CD4-positive, alpha-beta memory T cell (primary cell): ENCODE measurements at regions of chr19 and their contacts with region 1.

Region 1: DNA sequence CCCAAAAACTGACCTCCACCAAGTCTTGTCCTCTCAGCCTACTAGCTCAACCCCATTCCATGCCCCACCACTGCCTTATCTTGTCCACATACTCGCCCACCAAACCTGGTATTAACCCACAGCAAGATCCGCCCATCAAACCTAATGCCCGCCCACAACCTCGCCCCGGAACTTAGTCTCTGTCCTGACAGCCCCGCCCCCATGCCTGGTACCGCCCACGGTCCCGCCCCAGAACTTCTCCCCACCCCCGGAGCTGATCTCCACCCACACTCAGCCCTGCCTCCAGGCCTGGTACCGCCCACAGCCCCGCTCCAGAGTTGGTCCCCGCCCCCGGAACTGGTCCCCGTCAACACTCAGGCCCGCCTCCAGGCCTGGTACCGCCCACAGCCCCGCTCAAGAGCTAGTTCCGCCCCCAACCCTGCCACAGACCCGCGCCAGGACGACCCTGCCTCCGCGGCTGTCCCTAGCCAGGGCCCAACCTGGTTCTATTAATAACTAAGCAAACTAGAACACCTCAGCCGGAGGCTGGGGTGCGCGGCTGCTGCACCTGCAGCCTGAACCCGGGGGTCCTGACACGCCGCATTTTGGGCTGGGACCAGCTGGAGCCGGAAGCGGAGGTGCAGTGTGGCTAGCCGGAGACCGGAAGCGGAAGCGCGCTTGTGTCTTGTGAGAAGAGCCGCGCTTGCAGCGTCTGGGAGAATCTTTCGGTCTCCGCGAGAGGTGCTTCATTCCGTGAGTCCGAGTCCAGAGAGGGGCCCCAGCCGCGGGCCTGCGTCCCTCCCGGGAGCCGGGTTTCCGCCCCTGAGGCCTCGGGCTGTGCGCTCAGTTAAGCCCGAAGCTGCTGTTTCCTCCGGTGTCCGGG is at the start of gene ZNF557:
- DNase-seq: peak; percentile 99 to 100 (median 99)
- H3K4me3 ChIP-seq: peak within 1 kb of the TSS; percentile 92 to 96
- H3K4me3 Mint-ChIP-seq: peak within 1 kb of the TSS; percentile 92 to 99 (median 96)
- H3K27ac ChIP-seq: peak within 1 kb of the TSS; percentile 74
- H3K27ac Mint-ChIP-seq: peak within 1 kb of the TSS; percentile 89 to 98 (median 95)
- H3K4me1 ChIP-seq: peaks cover 21% of the 10 kb centered on the region
- H3K4me1 Mint-ChIP-seq: peaks cover 11 to 36% (median 18%) of the 10 kb centered on the region in 4 donors
- H3K27me3 ChIP-seq: no peaks in the 10 kb centered on the region
- H3K27me3 Mint-ChIP-seq: no peaks in the 10 kb centered on the region
- total RNA-seq, gene ZNF557: 32.3 to 33.2 TPM

Region 2: GRCh38 chr19:6903452-6903851 is 165.8 kb before region 1 on chr19:
- CTCF ChIA-PET with region 1: no interaction called
- POLR2A ChIA-PET with region 1: no interaction called
- intact Hi-C with region 1: no loop called
- DNase-seq: no peak
- H3K4me3 ChIP-seq: no peak overlapping the region
- H3K4me3 Mint-ChIP-seq: no peak overlapping the region
- H3K27ac ChIP-seq: no peak overlapping the region
- H3K27ac Mint-ChIP-seq: no peak overlapping the region
- H3K4me1 ChIP-seq: no peaks in the 10 kb centered on the region
- H3K4me1 Mint-ChIP-seq: peaks cover 0 to 2% (median 0%) of the 10 kb centered on the region in 4 donors
- H3K27me3 ChIP-seq: no peaks in the 10 kb centered on the region
- H3K27me3 Mint-ChIP-seq: peaks cover 1 to 2% of the 10 kb centered on the region in 2 donors

Region 3: DNA sequence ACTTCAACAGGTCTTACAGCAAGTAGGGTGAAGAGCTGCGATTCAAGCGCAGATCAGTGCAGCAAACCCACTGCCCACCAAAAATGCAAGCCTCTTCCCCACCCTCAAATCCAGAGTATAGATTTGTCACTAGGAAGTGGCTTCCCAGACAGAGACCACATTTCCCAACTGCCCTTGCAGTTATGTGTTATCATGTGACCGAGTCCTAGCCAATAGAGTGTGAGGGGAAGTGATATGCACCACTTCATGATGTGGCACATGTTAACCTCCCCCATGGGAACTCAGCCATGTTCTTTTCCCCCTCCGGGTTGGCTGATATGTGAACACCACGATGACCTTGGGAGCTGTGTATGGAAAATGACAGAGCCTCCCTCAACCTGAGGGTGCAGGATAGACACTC is 98.8 kb before region 1 on chr19:
- CTCF ChIA-PET with region 1: no interaction called
- POLR2A ChIA-PET with region 1: no interaction called
- intact Hi-C with region 1: no loop called
- DNase-seq: no peak
- H3K4me3 ChIP-seq: peak overlapping the region in 1 of 2 donors; percentile 11
- H3K4me3 Mint-ChIP-seq: no peak overlapping the region
- H3K27ac ChIP-seq: no peak overlapping the region
- H3K27ac Mint-ChIP-seq: peak overlapping the region in 1 of 7 donors; percentile 10
- H3K4me1 ChIP-seq: no peaks in the 10 kb centered on the region
- H3K4me1 Mint-ChIP-seq: no peaks in the 10 kb centered on the region
- H3K27me3 ChIP-seq: no peaks in the 10 kb centered on the region
- H3K27me3 Mint-ChIP-seq: peaks cover 0 to 2% of the 10 kb centered on the region in 2 donors

Region 4: GRCh38 chr19:7013678-7014077 is 55.6 kb before region 1 on chr19:
- CTCF ChIA-PET with region 1: no interaction called
- POLR2A ChIA-PET with region 1: interaction called, 11 read pairs
- intact Hi-C with region 1: no loop called
- DNase-seq: peak in 1 of 5 donors; percentile 17
- H3K4me3 ChIP-seq: no peak overlapping the region
- H3K4me3 Mint-ChIP-seq: peak overlapping the region in 6 of 8 donors; percentile 4 to 68 (median 30)
- H3K27ac ChIP-seq: no peak overlapping the region
- H3K27ac Mint-ChIP-seq: peak overlapping the region; percentile 33 to 89 (median 53)
- H3K4me1 ChIP-seq: peaks cover 38% of the 10 kb centered on the region
- H3K4me1 Mint-ChIP-seq: peaks cover 24 to 54% (median 35%) of the 10 kb centered on the region in 4 donors
- H3K27me3 ChIP-seq: no peaks in the 10 kb centered on the region
- H3K27me3 Mint-ChIP-seq: no peaks in the 10 kb centered on the region

Region 5: DNA sequence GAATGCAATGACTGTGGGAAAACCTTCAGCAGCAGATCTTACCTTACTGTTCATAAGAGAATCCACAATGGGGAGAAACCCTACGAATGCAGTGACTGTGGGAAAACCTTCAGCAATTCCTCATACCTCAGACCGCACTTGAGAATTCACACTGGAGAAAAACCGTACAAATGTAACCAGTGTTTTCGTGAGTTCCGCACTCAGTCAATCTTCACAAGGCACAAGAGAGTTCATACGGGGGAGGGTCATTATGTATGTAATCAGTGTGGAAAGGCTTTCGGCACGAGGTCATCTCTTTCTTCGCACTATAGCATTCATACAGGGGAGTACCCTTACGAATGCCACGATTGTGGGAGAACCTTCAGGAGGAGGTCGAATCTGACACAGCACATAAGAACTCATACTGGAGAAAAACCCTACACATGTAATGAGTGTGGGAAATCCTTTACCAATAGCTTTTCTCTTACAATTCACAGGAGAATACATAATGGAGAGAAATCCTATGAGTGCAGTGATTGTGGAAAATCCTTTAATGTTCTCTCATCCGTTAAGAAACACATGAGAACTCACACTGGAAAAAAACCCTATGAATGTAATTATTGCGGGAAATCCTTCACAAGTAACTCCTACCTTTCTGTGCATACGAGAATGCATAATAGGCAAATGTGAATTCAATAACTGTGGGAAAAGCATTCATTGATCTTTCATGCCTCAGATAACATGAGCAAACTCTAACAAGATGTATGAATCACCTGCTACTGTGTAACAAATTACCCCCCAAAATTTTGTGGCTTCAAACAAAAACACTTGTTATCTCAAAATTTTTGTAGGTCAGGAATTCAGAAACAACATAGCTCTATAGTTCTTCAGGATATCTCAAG is 14.0 kb after region 1 on chr19:
- CTCF ChIA-PET with region 1: no interaction called
- POLR2A ChIA-PET with region 1: interaction called, 33 read pairs
- intact Hi-C with region 1: no loop called
- DNase-seq: peak in 2 of 5 donors; percentile 10 to 16
- H3K4me3 ChIP-seq: no peak overlapping the region
- H3K4me3 Mint-ChIP-seq: peak overlapping the region in 2 of 8 donors; percentile 5 to 35
- H3K27ac ChIP-seq: no peak overlapping the region
- H3K27ac Mint-ChIP-seq: peak overlapping the region in 1 of 7 donors; percentile 21
- H3K4me1 ChIP-seq: no peaks in the 10 kb centered on the region
- H3K4me1 Mint-ChIP-seq: peaks cover 0 to 1% (median 0%) of the 10 kb centered on the region in 4 donors
- H3K27me3 ChIP-seq: no peaks in the 10 kb centered on the region
- H3K27me3 Mint-ChIP-seq: no peaks in the 10 kb centered on the region

Region 6: DNA sequence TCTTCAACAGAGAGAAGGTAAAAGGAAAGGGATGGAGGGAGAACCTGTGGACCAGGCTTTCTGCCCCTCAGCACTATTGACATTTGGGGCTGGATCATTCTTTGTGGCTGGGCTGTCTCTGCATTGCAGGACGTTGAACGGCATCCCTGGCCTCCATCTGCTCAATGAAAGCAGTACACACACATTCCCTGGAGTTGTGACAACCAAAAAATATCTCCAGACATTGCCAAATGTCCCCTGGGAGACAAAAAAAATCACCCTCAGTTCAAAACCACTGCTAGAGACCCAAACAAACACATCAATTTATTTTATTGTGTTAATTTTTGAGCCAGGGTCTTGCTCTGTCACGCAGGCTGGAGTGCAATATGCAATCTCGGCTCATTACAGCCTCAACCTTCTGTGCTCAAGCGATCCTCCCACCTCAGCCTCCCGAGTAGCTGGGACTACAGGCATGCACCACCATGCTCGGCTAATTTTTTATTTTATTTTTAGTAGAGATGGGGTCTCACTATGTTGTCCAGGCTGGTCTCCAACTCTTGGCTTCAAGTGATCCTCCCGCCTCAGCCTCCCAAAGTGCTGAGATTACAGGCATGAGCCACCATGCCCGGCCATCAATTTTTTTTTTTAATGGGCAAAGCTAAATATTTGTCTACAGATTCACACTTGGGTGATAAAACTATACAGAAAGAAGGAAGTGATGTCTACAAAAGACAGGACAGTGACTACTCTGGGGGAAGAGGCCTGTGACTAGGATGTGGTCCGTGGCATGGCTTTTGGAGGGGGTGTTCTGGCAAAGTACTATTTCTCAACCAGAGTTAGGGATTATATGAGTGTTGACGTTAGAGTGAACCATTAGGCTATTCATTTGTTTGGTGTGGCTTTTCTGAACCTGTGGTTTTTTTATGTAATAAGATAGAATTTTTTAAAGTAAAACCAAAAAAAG is 181.9 kb after region 1 on chr19:
- CTCF ChIA-PET with region 1: no interaction called
- POLR2A ChIA-PET with region 1: no interaction called
- intact Hi-C with region 1: no loop called
- DNase-seq: no peak
- H3K4me3 ChIP-seq: no peak overlapping the region
- H3K4me3 Mint-ChIP-seq: no peak overlapping the region
- H3K27ac ChIP-seq: no peak overlapping the region
- H3K27ac Mint-ChIP-seq: peak overlapping the region in 1 of 7 donors; percentile 69
- H3K4me1 ChIP-seq: no peaks in the 10 kb centered on the region
- H3K4me1 Mint-ChIP-seq: no peaks in the 10 kb centered on the region
- H3K27me3 ChIP-seq: no peaks in the 10 kb centered on the region
- H3K27me3 Mint-ChIP-seq: peaks cover 6 to 11% of the 10 kb centered on the region in 2 donors

Region 7: GRCh38 chr19:7629347-7630054 is 560.2 kb after region 1 on chr19 and contains the starts of genes PET100 and XAB2:
- CTCF ChIA-PET with region 1: no interaction called
- POLR2A ChIA-PET with region 1: interaction called, 10 read pairs
- intact Hi-C with region 1: no loop called
- DNase-seq: peak; percentile 93 to 98 (median 96)
- H3K4me3 ChIP-seq: peak within 1 kb of the TSS; percentile 81 to 96
- H3K4me3 Mint-ChIP-seq: peak within 1 kb of the TSS; percentile 95 to 99 (median 96)
- H3K27ac ChIP-seq: peak within 1 kb of the TSS; percentile 94
- H3K27ac Mint-ChIP-seq: peak within 1 kb of the TSS; percentile 92 to 100 (median 99)
- H3K4me1 ChIP-seq: peaks cover 31% of the 10 kb centered on the region
- H3K4me1 Mint-ChIP-seq: peaks cover 16 to 47% (median 34%) of the 10 kb centered on the region in 4 donors
- H3K27me3 ChIP-seq: no peaks in the 10 kb centered on the region
- H3K27me3 Mint-ChIP-seq: no peaks in the 10 kb centered on the region
- total RNA-seq, gene PET100: 120 to 144 TPM
- total RNA-seq, gene XAB2: 75.6 to 77.2 TPM